Calu3 (cell line): ENCODE measurements at regions of chr12 and their contacts with region 1.

Region 1: DNA sequence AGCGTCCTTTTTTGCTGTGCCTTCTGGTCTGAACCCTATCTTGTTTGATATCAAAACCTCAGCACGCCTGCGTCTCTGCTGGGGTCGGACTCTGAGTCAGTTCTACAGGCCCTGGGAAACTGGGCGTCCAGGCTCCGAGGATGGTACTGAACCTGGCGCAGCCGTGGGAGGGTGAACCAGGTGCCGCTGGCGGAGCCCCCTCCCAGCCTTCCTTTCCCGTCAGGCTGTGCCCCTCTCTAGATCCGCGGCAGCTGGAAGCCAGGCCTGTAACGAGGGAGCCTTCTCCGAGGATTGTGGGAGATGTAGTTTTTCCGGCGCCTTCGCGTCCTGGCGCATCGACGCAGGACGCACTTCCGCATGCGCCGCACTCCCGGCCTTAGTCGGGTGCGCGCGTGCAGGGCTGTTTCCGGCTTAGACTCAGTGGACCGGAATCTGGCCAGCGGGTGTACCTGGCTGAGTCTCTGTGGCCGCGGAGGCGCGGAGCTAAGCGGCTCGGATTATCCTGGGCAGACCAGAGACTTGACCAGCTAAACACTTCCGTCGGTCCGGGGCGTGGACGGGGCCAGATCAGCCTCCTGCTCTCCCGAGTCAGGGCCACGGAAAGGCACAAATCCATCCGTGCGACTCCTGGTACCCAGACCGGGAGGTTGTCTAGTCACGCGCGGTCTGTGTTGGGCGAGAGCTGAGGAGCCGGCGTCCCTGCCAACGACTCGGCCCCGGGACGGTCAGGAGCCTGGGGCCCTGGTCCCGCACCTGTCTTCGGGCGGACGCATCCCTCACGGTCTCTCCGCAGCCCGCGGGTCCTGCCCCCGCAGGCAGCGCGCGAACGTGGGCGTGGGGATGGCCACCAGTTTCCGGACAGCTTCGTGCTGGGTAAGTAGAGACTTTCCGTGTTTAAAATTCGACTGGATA is at the start of gene ZNF26:
- DNase-seq: peak; percentile 94
- H3K4me3 Mint-ChIP-seq: peak within 1 kb of the TSS; percentile 76
- H3K27ac Mint-ChIP-seq: peak within 1 kb of the TSS; percentile 95
- H3K4me1 Mint-ChIP-seq: peaks cover 26% of the 10 kb centered on the region
- H3K27me3 Mint-ChIP-seq: no peaks in the 10 kb centered on the region
- CTCF ChIP-seq: no peak
- total RNA-seq, gene ZNF26: 25.3 and 28.5 TPM in 2 replicates

Region 2: GRCh38 chr12:132956011-132956788 is 30.1 kb before region 1 on chr12 and contains the start of gene ZNF605:
- CTCF ChIA-PET with region 1: no interaction called
- intact Hi-C with region 1: no loop called
- DNase-seq: peak; percentile 95
- H3K4me3 Mint-ChIP-seq: peak within 1 kb of the TSS; percentile 67
- H3K27ac Mint-ChIP-seq: peak within 1 kb of the TSS; percentile 80
- H3K4me1 Mint-ChIP-seq: peaks cover 27% of the 10 kb centered on the region
- H3K27me3 Mint-ChIP-seq: no peaks in the 10 kb centered on the region
- CTCF ChIP-seq: no peak
- total RNA-seq, gene ZNF605: 31.1 and 32.8 TPM in 2 replicates

Region 3: DNA sequence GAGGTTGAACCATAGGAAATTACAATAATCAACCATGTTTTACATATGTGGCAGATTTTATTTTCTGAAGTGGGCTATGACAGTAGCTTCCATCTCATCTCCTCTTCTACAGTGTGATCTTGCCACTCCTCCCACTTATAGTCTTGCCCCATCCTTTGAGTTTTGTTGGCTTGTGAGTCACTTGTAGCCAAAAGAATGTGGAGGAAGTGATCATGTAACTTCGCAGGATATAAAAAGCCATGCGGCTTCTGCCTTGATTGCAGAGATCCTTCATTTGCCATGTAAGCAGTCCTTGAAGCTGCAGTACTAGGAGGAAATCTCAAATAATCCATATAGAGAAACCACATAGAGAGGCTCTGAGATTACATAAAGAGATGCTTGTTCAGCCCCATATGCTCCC is 37.3 kb after region 1 on chr12:
- CTCF ChIA-PET with region 1: no interaction called
- intact Hi-C with region 1: no loop called
- DNase-seq: no peak
- H3K4me3 Mint-ChIP-seq: no peak overlapping the region
- H3K27ac Mint-ChIP-seq: no peak overlapping the region
- H3K4me1 Mint-ChIP-seq: no peaks in the 10 kb centered on the region
- H3K27me3 Mint-ChIP-seq: no peaks in the 10 kb centered on the region
- CTCF ChIP-seq: no peak

Region 4: DNA sequence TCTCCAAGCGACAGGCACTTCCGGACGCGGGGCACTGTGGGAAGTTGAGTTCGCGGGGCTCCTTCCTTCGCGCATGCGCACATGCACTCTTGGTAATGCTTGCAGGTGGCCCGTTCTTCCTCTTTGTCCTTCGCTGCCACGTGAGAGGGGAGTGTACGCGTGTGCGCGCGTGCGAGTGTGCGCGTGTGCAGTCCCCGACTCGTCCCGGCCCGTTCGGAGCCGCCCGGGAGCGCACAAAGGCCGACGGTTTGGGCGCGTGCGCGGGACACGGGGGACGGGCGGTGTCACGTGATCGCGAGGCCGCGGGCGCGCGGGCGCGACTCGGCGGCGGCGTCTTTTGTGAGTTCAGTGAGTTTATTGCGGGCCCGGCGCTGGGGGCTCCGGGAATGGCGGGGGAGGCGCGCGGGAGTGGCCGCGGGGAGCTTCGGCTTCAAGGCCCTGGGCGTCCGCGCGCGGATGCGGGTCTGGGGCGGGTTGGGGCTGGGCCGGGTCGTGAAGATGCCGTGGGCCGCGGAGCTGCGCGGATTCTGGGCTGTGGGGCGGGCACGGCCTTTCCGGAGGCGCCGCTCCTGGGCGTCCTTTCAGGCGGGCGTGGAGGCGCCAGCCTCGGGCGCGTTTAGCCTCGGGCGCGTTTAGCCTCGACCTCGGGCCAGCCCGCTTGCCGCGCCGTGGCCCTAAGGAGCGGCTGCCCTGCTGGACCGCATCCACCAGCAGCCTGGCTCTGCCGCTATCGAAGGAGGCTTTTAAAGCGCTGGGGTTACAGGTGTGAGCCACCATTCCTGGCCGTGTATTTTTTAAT is 51.1 kb after region 1 on chr12 and contains the start of gene ZNF84:
- CTCF ChIA-PET with region 1: no interaction called
- intact Hi-C with region 1: loop called (anchors 2 kb)
- DNase-seq: peak; percentile 98
- H3K4me3 Mint-ChIP-seq: peak within 1 kb of the TSS; percentile 94
- H3K27ac Mint-ChIP-seq: peak within 1 kb of the TSS; percentile 86
- H3K4me1 Mint-ChIP-seq: no peaks in the 10 kb centered on the region
- H3K27me3 Mint-ChIP-seq: no peaks in the 10 kb centered on the region
- CTCF ChIP-seq: no peak
- total RNA-seq, gene ZNF84: 44.5 and 49.8 TPM in 2 replicates